ENCODE measurements at regions of chr1 and their contacts with region 1.

Region 1: GRCh38 chr1:23867953-23868556 is at the start of gene FUCA1:
- DNase-seq: peak; percentile 94 to 99
- ATAC-seq: peak; percentile 99 to 100 (median 99)
- H3K4me3 ChIP-seq: peak within 1 kb of the TSS; percentile 78
- H3K4me3 Mint-ChIP-seq: peak within 1 kb of the TSS; percentile 92
- H3K27ac ChIP-seq: peak within 1 kb of the TSS; percentile 61
- H3K27ac Mint-ChIP-seq: peak within 1 kb of the TSS; percentile 80 to 87
- H3K4me1 ChIP-seq: peaks cover 29% of the 10 kb centered on the region
- H3K4me1 Mint-ChIP-seq: peaks cover 23 to 30% of the 10 kb centered on the region in 2 donors
- H3K27me3 ChIP-seq: no peaks in the 10 kb centered on the region
- H3K27me3 Mint-ChIP-seq: peaks cover 4 to 7% of the 10 kb centered on the region in 2 donors
- CTCF ChIP-seq: peak; percentile 90
- total RNA-seq, gene FUCA1: 6.8 to 12.5 (median 11.9) TPM

Region 2: DNA sequence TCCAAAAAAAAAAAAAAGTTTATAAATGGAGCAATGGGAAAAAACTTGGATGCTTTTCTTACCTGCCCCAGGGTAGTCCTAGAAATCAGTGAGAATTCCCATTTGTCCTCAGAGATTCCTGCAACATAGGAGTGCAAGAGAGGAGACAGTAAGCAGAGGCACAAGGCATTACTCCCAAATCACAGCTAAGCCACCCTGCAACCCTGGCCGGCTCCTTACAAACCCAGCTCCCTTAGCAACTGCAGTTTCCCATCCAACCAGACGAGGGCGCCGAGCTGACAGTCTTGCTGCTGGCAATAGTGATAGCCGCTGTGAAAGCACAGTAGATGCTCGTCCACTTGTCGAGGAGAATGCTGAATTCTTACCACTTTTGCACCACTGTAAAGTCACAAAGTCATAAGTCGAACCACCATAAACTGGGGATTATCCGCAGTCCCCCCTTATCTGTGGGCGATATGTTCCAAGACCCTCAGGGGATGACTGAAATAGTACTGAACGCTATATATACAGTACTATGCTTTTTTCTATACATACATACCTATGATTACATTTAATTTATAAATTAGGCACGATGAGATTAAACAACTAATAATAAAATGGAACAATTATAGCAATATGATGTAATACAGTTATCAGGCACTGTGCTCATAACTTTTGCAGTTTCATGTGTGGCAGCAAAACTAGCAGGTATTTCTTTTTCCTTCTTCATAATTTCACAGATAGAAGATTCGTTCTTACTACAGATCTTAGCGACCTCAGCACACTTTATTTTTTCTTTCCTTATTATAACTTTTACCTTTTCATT is 95.8 kb before region 1 on chr1:
- intact Hi-C with region 1: loop called (anchors 1 kb)
- DNase-seq: peak; percentile 79 to 90
- ATAC-seq: peak; percentile 92 to 100 (median 99)
- H3K4me3 ChIP-seq: no peak overlapping the region
- H3K4me3 Mint-ChIP-seq: no peak overlapping the region
- H3K27ac ChIP-seq: no peak overlapping the region
- H3K27ac Mint-ChIP-seq: no peak overlapping the region
- H3K4me1 ChIP-seq: peaks cover 7% of the 10 kb centered on the region
- H3K4me1 Mint-ChIP-seq: peaks cover 0 to 3% of the 10 kb centered on the region in 2 donors
- H3K27me3 ChIP-seq: no peaks in the 10 kb centered on the region
- H3K27me3 Mint-ChIP-seq: no peaks in the 10 kb centered on the region
- CTCF ChIP-seq: peak; percentile 85

Region 3: GRCh38 chr1:23800400-23801337 is 67.4 kb before region 1 on chr1 and contains the start of gene GALE:
- intact Hi-C with region 1: loop called (anchors 2 kb)
- DNase-seq: peak; percentile 93 to 98
- ATAC-seq: peak; percentile 92 to 98 (median 93)
- H3K4me3 ChIP-seq: peak within 1 kb of the TSS; percentile 93
- H3K4me3 Mint-ChIP-seq: peak within 1 kb of the TSS; percentile 94
- H3K27ac ChIP-seq: peak within 1 kb of the TSS; percentile 88
- H3K27ac Mint-ChIP-seq: peak within 1 kb of the TSS; percentile 85 to 92
- H3K4me1 ChIP-seq: peaks cover 30% of the 10 kb centered on the region
- H3K4me1 Mint-ChIP-seq: peaks cover 16 to 29% of the 10 kb centered on the region in 2 donors
- H3K27me3 ChIP-seq: no peaks in the 10 kb centered on the region
- H3K27me3 Mint-ChIP-seq: no peaks in the 10 kb centered on the region
- CTCF ChIP-seq: no peak
- total RNA-seq, gene GALE: 12.8 to 20.3 (median 14.6) TPM

Region 4: DNA sequence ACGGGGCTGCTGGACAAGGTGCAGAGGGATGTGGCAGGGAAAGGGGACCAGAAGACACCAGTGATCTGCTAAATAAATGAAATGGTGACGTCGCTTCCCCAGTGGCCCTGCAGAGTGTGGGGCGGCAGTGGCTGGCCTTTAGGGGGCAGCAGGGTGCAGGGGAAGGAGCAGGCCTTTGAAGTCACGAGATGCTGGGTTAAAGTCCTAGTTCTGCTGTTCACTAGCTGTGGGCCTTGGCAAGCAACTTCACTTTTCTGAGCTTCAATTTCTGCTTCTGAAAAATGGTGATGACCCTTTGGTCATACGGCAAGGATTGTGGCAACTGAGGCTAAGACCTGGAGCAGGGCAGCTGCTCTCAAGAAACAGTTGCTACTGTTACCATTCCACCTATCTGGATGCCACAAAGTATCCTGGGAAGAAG is 58.3 kb before region 1 on chr1:
- intact Hi-C with region 1: loop called (anchors 1 kb)
- DNase-seq: peak; percentile 72 to 89
- ATAC-seq: peak; percentile 93 to 98 (median 98)
- H3K4me3 ChIP-seq: no peak overlapping the region
- H3K4me3 Mint-ChIP-seq: no peak overlapping the region
- H3K27ac ChIP-seq: peak overlapping the region; percentile 16
- H3K27ac Mint-ChIP-seq: peak overlapping the region; percentile 18 to 32
- H3K4me1 ChIP-seq: peaks cover 16% of the 10 kb centered on the region
- H3K4me1 Mint-ChIP-seq: peaks cover 0 to 22% of the 10 kb centered on the region in 2 donors
- H3K27me3 ChIP-seq: no peaks in the 10 kb centered on the region
- H3K27me3 Mint-ChIP-seq: no peaks in the 10 kb centered on the region
- CTCF ChIP-seq: peak; percentile 73

Region 5: GRCh38 chr1:23916209-23917131 is 48.4 kb after region 1 on chr1:
- intact Hi-C with region 1: loop called (anchors 1 kb)
- DNase-seq: peak; percentile 57 to 81
- ATAC-seq: peak; percentile 90 to 94 (median 92)
- H3K4me3 ChIP-seq: no peak overlapping the region
- H3K4me3 Mint-ChIP-seq: no peak overlapping the region
- H3K27ac ChIP-seq: no peak overlapping the region
- H3K27ac Mint-ChIP-seq: peak overlapping the region in 1 of 2 donors; percentile 12
- H3K4me1 ChIP-seq: peaks cover 50% of the 10 kb centered on the region
- H3K4me1 Mint-ChIP-seq: peaks cover 27 to 39% of the 10 kb centered on the region in 2 donors
- H3K27me3 ChIP-seq: no peaks in the 10 kb centered on the region
- H3K27me3 Mint-ChIP-seq: peaks cover 0 to 3% of the 10 kb centered on the region in 2 donors
- CTCF ChIP-seq: peak; percentile 79

Region 6: DNA sequence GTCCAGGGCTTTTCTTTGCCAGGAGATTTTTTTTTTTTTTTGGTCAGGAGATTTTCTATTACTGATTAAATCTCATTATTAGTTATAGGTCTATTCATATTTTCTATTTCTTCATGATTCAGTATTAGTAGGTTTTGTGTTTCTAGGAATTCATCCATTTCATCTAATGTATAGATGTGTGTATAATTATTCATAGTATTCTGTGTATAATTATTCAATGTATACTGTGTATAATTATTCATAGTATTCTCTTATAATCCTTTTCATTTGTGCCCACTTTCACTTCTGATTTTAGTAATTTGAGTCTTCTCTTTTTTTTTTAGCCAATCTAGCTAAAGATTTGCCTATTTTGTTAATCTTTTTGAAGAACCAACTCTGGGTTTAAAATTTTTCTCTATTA is 79.3 kb after region 1 on chr1:
- intact Hi-C with region 1: no loop called
- DNase-seq: no peak
- ATAC-seq: no peak
- H3K4me3 ChIP-seq: no peak overlapping the region
- H3K4me3 Mint-ChIP-seq: no peak overlapping the region
- H3K27ac ChIP-seq: no peak overlapping the region
- H3K27ac Mint-ChIP-seq: no peak overlapping the region
- H3K4me1 ChIP-seq: no peaks in the 10 kb centered on the region
- H3K4me1 Mint-ChIP-seq: no peaks in the 10 kb centered on the region
- H3K27me3 ChIP-seq: no peaks in the 10 kb centered on the region
- H3K27me3 Mint-ChIP-seq: peaks cover 10 to 18% of the 10 kb centered on the region in 2 donors
- CTCF ChIP-seq: no peak